Right ventricle myocardium inferior (tissue), 1 donor: ENCODE measurements at regions of chr3 and their contacts with region 1.

Region 1: DNA sequence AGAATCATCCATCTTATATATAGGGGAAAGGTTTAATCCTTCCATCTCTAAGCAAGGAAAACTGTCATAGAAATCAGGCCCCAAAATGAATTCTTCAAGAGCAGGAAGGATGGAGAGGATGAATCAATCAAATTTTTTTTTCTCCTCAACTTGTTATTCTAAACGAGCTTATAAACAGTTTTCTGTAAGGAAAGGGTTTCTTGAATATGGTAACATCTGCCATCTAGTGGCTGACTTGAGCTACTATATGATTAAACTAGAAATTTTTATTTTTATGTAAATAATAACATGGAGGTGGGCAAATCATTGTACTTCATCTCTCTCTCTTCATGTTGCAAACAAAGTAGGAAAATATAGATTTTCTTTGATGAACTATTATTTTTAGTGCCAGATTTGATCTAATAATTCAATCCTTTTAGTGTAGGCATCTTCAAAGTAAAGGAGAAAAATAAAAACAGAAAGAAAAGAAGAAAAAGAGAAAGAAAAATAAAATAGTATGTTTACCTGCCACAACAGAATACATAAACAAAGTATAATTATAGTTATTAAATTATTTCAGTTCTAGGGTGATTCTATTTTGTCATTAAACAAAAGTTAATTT is 146.6 kb downstream of the SERPINI1 start:
- DNase-seq: no peak
- ATAC-seq: no peak

Region 2: DNA sequence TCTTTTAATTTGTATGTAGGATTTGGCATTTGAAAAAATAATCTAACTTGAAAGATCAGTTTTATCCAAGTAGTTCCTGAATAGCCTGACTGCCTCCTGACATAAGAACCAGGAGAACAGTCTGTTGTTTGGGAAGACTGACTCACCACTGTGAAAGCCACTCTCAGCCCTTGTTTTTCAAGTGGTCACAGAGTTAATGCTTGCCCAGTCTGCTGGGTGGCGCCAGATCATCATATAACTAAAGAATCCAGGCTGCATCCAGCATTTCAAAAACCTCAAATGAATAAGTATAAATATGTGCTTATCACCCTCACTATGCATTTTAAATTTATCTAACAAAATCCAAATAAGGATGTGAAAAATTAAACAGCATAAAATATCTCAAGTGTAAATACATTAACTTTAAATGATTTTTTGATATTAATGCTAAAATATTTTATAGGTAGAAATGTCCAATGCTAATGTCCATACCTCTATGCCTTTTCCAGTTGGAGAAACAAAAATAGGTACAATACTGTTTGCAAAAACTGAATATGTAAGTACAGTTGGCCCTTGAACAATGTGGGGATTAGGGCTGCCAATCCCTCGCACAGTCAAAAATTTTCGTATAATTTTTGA is 475.2 kb before region 1 on chr3:
- intact Hi-C with region 1: loop called (anchors 5 kb)
- DNase-seq: no peak
- ATAC-seq: no peak

Region 3: GRCh38 chr3:167723070-167723469 is 159.1 kb before region 1 on chr3:
- intact Hi-C with region 1: no loop called
- DNase-seq: no peak
- ATAC-seq: no peak

Region 4: DNA sequence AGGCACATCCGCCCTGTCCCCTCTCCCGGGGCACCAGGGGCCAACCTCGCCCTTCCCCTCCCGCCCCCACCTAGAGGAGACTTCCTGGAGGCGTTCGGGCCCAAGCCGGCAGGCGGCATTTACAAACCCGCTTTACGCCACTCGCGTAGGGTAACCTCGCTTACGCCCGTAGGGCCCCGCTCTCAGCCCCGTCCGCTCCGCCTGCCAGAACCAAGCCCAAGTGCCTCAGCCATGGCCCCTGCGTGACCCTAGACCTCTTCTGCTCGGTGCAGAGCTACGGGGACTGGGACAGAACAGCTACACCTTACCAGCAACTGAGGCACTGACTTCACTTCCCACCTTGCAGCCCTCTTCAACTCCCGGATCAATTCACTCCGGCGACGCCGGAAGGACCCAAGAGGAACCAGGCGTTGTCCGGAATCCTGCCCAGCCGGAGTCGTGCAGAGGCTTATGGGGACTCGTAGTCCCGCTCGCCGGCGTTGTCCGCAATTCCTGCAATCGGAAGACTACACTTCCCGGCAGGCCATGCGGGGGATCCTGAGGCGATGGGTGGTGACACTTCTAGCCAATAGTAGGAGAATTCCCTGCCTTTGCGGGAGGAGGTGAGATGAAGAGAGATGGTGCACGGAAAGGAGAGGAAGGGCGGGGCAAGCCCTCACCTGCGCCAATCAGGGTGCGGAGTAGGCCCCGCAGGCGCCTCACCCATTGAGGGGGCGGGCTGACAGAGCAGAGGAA is 147.5 kb before region 1 on chr3 and contains the start of gene PDCD10:
- intact Hi-C with region 1: loop called (anchors 5 kb)
- DNase-seq: peak; percentile 99
- ATAC-seq: peak; percentile 98
- total RNA-seq, gene PDCD10: 31.2 TPM

Region 5: DNA sequence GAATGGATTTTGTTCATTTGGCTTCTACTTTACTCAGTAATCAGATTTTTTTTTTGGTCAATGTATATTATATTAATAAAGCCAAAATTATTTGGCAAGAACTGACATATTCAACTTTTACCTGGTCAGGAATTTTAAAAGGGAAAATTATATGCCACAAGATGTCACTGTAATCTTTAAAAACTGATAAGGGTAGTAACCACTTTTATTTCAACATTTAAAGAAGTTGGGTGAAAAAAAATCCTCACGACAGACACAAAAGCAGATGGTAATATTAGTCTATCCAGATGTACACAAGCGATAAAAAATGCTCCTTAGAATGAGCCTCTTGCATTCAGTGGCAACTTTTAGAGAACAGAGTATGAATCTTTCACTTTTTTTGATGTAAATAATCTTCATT is 44.7 kb before region 1 on chr3:
- intact Hi-C with region 1: loop called (anchors 2 kb)
- DNase-seq: no peak
- ATAC-seq: no peak